ENCODE measurements at regions of chr17 and their contacts with region 1.

Region 1: DNA sequence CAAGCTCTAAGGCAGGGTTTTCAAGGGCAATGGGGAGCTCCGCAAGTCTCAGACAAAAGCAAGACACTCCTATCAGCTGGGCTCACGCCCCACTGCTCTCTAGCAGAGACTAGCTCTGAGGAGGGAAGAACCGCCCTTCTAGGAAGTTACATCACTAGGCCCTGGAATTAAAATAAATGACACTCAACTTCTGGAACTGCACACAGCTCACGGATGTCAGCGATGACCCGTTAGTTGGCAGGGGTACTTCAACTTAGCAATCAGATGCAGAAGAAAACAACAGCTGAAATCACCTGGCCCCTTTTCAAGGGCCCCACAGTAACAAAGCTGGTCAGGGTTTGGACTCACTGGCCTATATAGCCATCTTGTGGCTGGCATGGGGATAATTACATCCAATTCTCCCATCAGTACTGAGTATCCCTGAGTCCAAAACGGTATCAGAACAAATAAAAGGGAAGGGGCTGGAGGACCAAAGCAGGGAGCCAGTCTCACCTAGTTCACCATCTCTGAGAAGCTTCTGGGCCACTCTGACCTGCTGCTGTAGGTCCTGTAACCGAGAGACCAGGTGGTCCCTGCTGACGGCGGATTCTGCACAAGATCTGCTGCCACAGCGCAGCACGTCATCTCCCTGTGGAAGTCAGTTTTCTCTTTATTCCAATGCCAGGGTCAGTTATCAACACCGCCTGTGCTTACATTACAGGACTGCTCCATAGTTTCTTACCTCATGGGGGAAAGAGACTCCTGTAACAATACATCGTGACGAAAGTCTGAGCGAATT is 22.2 kb downstream of the SERPINF1 start:
- DNase-seq: peak; percentile 80
- H3K4me3 ChIP-seq: no peak overlapping the region
- H3K27ac ChIP-seq: peak overlapping the region; percentile 19
- H3K4me1 ChIP-seq: peaks cover 21% of the 10 kb centered on the region
- H3K27me3 ChIP-seq: no peaks in the 10 kb centered on the region
- CTCF ChIP-seq: peak; percentile 49 to 63
- POLR2A ChIP-seq: no peak

Region 2: GRCh38 chr17:1673041-1673785 is 110.8 kb before region 1 on chr17:
- CTCF ChIA-PET with region 1: interaction called, 20 read pairs
- POLR2A ChIA-PET with region 1: no interaction called
- dilution Hi-C with region 1: no loop called
- intact Hi-C with region 1: loop called (anchors 1 kb)
- DNase-seq: no peak
- H3K4me3 ChIP-seq: no peak overlapping the region
- H3K27ac ChIP-seq: no peak overlapping the region
- H3K4me1 ChIP-seq: no peaks in the 10 kb centered on the region
- H3K27me3 ChIP-seq: no peaks in the 10 kb centered on the region
- CTCF ChIP-seq: no peak
- POLR2A ChIP-seq: no peak

Region 3: GRCh38 chr17:1724506-1725362 is 59.3 kb before region 1 on chr17 and contains the start of gene WDR81:
- CTCF ChIA-PET with region 1: interaction called, 262 read pairs
- POLR2A ChIA-PET with region 1: interaction called, 4 read pairs
- dilution Hi-C with region 1: no loop called
- intact Hi-C with region 1: loop called (anchors 1 kb)
- DNase-seq: peak; percentile 69
- H3K4me3 ChIP-seq: peak within 1 kb of the TSS; percentile 14 to 55 (median 16)
- H3K27ac ChIP-seq: peak within 1 kb of the TSS; percentile 22
- H3K4me1 ChIP-seq: peaks cover 7% of the 10 kb centered on the region
- H3K27me3 ChIP-seq: no peaks in the 10 kb centered on the region
- CTCF ChIP-seq: no peak
- POLR2A ChIP-seq: peak; percentile 50
- total RNA-seq, gene WDR81: 16.5 and 17.3 TPM in 2 replicates

Region 4: DNA sequence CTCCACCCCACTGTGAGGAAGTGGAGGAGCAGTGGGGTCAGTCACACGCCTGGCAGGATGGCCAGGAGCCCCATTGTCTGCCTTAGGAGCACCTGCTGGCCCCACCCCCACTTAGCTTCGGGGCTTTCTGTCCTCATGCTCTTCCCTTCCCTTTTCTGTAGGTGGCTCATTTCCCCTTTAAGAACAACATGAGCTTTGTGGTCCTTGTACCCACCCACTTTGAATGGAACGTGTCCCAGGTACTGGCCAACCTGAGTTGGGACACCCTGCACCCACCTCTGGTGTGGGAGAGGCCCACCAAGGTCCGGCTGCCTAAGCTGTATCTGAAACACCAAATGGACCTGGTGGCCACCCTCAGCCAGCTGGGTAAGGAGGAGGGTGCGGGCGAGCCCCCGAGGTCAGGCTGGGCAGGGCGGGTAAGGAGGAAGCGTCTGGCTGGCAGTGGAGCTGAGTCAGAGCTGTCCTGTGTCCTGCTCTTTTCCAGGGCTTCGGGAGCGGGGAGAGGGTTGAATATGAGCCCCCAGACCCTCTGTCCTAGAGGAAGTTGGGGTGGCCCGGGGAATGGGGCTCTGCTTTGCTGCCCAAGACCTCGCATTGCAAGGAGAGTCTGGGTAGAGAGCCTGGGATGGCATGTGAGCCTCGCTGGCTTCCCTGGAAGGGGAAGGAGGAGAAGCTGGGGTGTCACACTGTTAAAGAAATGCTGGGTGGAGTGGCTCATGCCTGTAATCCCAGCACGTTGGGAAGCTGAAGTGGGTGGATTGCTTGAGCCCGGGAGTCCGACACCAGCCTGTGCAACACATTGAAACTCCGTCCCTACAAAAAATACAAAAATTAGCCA is 31.4 kb before region 1 on chr17:
- CTCF ChIA-PET with region 1: interaction called, 10 read pairs
- POLR2A ChIA-PET with region 1: interaction called, 6 read pairs
- dilution Hi-C with region 1: no loop called
- intact Hi-C with region 1: no loop called
- DNase-seq: no peak
- H3K4me3 ChIP-seq: no peak overlapping the region
- H3K27ac ChIP-seq: no peak overlapping the region
- H3K4me1 ChIP-seq: peaks cover 4% of the 10 kb centered on the region
- H3K27me3 ChIP-seq: no peaks in the 10 kb centered on the region
- CTCF ChIP-seq: no peak
- POLR2A ChIP-seq: no peak

Region 5: GRCh38 chr17:1762901-1763898 is 20.8 kb before region 1 on chr17:
- CTCF ChIA-PET with region 1: interaction called, 10 read pairs
- POLR2A ChIA-PET with region 1: no interaction called
- dilution Hi-C with region 1: no loop called
- intact Hi-C with region 1: no loop called
- DNase-seq: no peak
- H3K4me3 ChIP-seq: no peak overlapping the region
- H3K27ac ChIP-seq: no peak overlapping the region
- H3K4me1 ChIP-seq: peaks cover 4% of the 10 kb centered on the region
- H3K27me3 ChIP-seq: no peaks in the 10 kb centered on the region
- CTCF ChIP-seq: no peak
- POLR2A ChIP-seq: no peak

Region 6: GRCh38 chr17:1773696-1774181 is 10.3 kb before region 1 on chr17:
- CTCF ChIA-PET with region 1: interaction called, 10 read pairs
- POLR2A ChIA-PET with region 1: no interaction called
- dilution Hi-C with region 1: no loop called
- intact Hi-C with region 1: no loop called
- DNase-seq: no peak
- H3K4me3 ChIP-seq: no peak overlapping the region
- H3K27ac ChIP-seq: no peak overlapping the region
- H3K4me1 ChIP-seq: no peaks in the 10 kb centered on the region
- H3K27me3 ChIP-seq: no peaks in the 10 kb centered on the region
- CTCF ChIP-seq: no peak
- POLR2A ChIP-seq: no peak